CD8-positive, alpha-beta T cell (primary cell): ENCODE measurements at regions of chrX and their contacts with region 1.

Region 1: DNA sequence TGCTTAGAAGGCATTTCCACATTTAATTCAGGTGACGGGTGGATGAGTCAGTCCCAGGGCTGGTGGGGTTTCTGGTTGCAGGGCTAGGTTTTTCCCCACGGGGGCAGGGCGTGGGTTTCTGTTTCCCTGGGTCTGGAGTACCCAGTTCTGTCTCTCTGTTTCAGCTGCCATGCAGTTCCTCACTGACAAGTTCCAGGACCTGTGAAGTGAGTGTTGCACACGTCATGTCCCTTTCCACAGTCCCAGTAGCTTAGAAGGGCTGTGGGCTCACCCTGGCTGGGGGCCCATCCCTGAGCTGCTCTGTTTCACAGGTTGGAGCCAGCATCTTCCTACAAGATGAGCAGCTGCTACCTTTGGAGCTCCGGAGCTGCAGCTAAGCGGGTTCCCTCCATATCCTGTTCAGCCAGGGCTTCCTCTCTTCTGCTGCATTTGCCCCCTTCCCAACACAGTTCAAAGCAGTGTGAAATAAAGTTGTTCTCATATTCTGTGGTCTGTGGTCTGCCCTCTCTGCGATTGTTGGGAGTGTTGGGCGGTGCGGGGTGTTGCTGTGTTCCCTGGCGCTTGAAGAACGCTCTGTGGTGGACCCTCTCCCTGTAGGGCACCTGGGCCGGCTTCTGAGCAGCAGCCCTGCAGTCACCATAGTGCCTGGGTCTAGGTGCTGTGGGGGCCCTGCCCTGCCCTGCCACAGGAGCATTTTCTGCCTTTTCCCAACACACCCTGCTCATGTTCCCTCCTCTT is 3.9 kb downstream of the LOC101059915 start:
- DNase-seq: peak in 3 of 9 experiments; percentile 25 to 48 (median 33)
- ATAC-seq: no peak
- H3K4me3 ChIP-seq: no peak overlapping the region
- H3K4me3 Mint-ChIP-seq: no peak overlapping the region
- H3K27ac ChIP-seq: no peak overlapping the region
- H3K27ac Mint-ChIP-seq: no peak overlapping the region
- H3K4me1 ChIP-seq: peaks cover 18% of the 10 kb centered on the region
- H3K4me1 Mint-ChIP-seq: peaks cover 18% of the 10 kb centered on the region
- H3K27me3 ChIP-seq: no peaks in the 10 kb centered on the region
- H3K27me3 Mint-ChIP-seq: no peaks in the 10 kb centered on the region
- CTCF ChIP-seq: no peak

Region 2: DNA sequence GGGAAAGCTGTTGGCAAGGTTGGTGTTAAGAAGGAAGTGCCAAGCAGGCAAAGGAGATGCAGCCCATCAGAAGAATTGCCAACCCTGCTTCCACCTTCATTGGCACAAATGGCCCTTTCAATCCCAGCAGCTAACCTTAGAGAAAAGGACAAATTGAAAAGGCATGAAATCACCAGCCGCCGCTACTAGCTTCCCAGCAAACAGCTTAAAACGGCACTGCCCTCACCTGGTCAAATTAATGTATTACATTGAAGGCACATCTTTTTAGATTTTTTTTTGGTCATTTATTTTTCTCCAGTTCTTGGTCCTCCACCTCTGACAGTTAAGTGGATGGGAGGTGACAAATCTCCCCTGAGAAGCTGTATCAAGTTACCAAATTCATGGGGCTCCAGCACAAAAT is 188.4 kb after region 1 on chrX:
- CTCF ChIA-PET with region 1: interaction called, 19 read pairs
- POLR2A ChIA-PET with region 1: no interaction called
- intact Hi-C with region 1: loop called in 1 of 2 experiments (anchors 1 kb)
- DNase-seq: peak in 7 of 9 experiments; percentile 3 to 59 (median 34)
- ATAC-seq: peak; percentile 38
- H3K4me3 ChIP-seq: no peak overlapping the region
- H3K4me3 Mint-ChIP-seq: no peak overlapping the region
- H3K27ac ChIP-seq: no peak overlapping the region
- H3K27ac Mint-ChIP-seq: no peak overlapping the region
- H3K4me1 ChIP-seq: no peaks in the 10 kb centered on the region
- H3K4me1 Mint-ChIP-seq: peaks cover 2% of the 10 kb centered on the region
- H3K27me3 ChIP-seq: no peaks in the 10 kb centered on the region
- H3K27me3 Mint-ChIP-seq: no peaks in the 10 kb centered on the region
- CTCF ChIP-seq: peak; percentile 50